ENCODE measurements at regions of chr5 and their contacts with region 1.

Region 1: DNA sequence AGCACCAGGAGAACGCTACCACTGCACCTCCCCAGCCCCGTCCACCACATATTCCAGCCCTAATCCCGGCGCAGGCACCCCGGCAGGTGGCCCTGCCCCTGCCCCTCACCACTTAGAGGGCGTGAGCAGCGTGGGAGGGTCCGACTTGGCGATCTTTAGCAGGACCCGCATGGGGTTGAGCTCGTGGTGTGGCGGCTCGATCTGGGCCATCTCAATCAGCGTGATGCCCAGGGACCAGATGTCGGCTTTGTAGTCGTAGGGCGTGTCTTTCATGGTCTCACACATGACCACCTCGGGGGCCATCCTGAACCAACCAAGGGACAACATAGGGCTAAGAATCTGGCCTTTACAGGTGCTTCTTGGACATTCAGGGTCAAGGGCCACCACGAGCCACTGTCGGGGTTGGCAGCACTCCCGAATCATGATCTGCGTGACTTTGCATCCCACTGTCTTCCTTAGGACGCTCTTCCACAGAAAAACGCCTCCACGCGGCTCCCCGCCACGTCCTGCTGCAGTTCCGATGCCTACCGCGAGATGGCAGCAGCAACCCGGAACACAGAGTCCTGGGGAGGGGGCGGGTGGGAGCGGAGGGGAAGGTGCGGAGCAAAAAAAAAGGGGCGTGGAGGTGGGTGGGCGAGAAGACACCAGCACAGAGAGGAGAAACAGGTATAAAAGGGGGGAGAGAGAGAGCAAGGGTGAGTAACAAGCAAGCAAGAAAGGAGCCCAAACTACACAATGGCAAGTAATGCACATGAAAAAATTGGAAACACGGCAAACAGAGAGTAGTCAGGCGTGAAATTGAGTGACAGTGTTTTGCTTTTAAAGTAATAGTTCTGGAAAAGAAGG is 81.3 kb downstream of the STK10 start:
- DNase-seq: peak; percentile 49 to 75 (median 51)
- H3K4me3 ChIP-seq: peak overlapping the region in 1 of 4 donors; percentile 44
- H3K27ac ChIP-seq: peak overlapping the region in 2 of 5 donors; percentile 9 to 33
- H3K4me1 ChIP-seq: peaks cover 14 to 47% of the 10 kb centered on the region in 2 donors
- H3K27me3 ChIP-seq: no peaks in the 10 kb centered on the region
- CTCF ChIP-seq: peak; percentile 76 to 97 (median 89)
- POLR2A ChIP-seq: no peak

Region 2: GRCh38 chr5:172188033-172188892 is 81.5 kb after region 1 on chr5 and contains the start of gene STK10:
- intact Hi-C with region 1: loop called (anchors 2 to 5 kb)
- DNase-seq: peak; percentile 93 to 95 (median 94)
- H3K4me3 ChIP-seq: peak within 1 kb of the TSS; percentile 21 to 88 (median 82)
- H3K27ac ChIP-seq: peak within 1 kb of the TSS; percentile 67 to 90 (median 84)
- H3K4me1 ChIP-seq: peaks cover 5 to 21% of the 10 kb centered on the region in 2 donors
- H3K27me3 ChIP-seq: no peaks in the 10 kb centered on the region
- CTCF ChIP-seq: peak; percentile 83 to 95 (median 86)
- POLR2A ChIP-seq: peak; percentile 63 to 74
- total RNA-seq, gene STK10: 6.6 to 39.1 (median 24.2) TPM

Region 3: DNA sequence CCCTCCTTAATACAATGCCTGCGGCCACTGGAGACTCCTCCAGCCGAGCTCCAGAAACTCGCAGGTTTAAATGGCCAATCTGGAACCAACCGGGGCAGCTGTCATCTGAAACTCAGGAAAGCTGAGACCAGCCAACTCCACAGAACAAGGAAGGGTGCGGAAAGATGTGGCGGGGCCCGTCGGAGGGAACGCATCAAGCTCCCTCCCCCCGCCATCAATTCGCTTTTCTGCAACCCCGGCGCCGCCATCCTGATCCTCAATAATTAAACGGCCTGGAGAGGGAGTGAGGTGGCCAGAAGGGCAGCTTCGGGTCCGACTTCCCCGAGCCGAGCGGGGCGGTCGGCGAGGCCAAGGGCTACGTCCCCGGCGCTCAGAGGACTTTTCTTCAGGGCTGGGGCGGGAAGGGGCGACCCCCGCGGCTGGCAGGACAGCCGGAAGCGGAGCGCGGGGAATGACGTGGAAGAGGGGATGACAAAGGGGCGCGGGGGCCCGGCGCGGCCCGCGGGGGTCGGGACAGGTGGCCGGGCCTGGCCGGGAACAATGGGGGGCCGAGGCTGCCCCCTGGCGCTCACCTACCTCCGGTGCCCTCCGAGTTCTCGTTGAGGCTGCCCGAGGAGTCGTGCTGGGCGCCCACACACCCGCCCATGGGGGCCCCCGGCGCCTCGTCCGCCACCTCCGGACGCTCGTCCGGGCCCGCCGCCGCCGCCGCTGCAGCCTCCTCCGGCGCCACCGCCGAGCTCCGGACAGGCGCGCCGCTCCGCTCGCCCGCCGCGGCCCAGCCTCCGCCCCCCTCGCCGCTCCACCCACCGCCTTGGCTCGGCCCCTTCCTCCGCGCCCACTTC is 176.5 kb after region 1 on chr5 and contains the start of gene UBTD2:
- intact Hi-C with region 1: loop called in 1 of 2 experiments (anchors 5 kb)
- DNase-seq: peak; percentile 82 to 89 (median 86)
- H3K4me3 ChIP-seq: peak within 1 kb of the TSS; percentile 63 to 83 (median 68)
- H3K27ac ChIP-seq: peak within 1 kb of the TSS; percentile 46 to 99 (median 87)
- H3K4me1 ChIP-seq: peaks cover 22 to 26% of the 10 kb centered on the region in 2 donors
- H3K27me3 ChIP-seq: no peaks in the 10 kb centered on the region
- CTCF ChIP-seq: peak in 5 of 6 experiments; percentile 27 to 54 (median 43)
- POLR2A ChIP-seq: peak in 1 of 2 donors; percentile 70
- total RNA-seq, gene UBTD2: 11.4 to 24.7 (median 17.8) TPM

Region 4: GRCh38 chr5:172293054-172293744 is 186.5 kb after region 1 on chr5:
- intact Hi-C with region 1: loop called (anchors 5 kb)
- DNase-seq: peak; percentile 72 to 93 (median 85)
- H3K4me3 ChIP-seq: no peak overlapping the region
- H3K27ac ChIP-seq: peak overlapping the region in 2 of 5 donors; percentile 30 to 46
- H3K4me1 ChIP-seq: peaks cover 6 to 7% of the 10 kb centered on the region in 2 donors
- H3K27me3 ChIP-seq: no peaks in the 10 kb centered on the region
- CTCF ChIP-seq: peak; percentile 71 to 92 (median 88)
- POLR2A ChIP-seq: no peak